Activated CD4-positive, alpha-beta memory T cell treated with anti-CD3 and anti-CD28 coated beads for 36 hours (primary cell): ENCODE measurements at regions of chr15 and their contacts with region 1.

Region 1: GRCh38 chr15:73633111-73633990 is at the start of gene NPTN:
- DNase-seq: peak; percentile 99
- H3K4me3 Mint-ChIP-seq: peak within 1 kb of the TSS; percentile 83
- H3K27ac Mint-ChIP-seq: peak within 1 kb of the TSS; percentile 52
- H3K4me1 Mint-ChIP-seq: peaks cover 47% of the 10 kb centered on the region
- H3K27me3 Mint-ChIP-seq: peaks cover 10% of the 10 kb centered on the region
- total RNA-seq, gene NPTN: 46.7 to 49.8 TPM

Region 2: GRCh38 chr15:72783563-72784237 is 849.7 kb before region 1 on chr15 and contains the start of gene ADPGK:
- CTCF ChIA-PET with region 1: no interaction called
- POLR2A ChIA-PET with region 1: no interaction called
- intact Hi-C with region 1: loop called (anchors 2 kb)
- DNase-seq: peak; percentile 95
- H3K4me3 Mint-ChIP-seq: peak within 1 kb of the TSS; percentile 85
- H3K27ac Mint-ChIP-seq: peak within 1 kb of the TSS; percentile 93
- H3K4me1 Mint-ChIP-seq: peaks cover 65% of the 10 kb centered on the region
- H3K27me3 Mint-ChIP-seq: no peaks in the 10 kb centered on the region
- total RNA-seq, gene ADPGK: 60.9 to 61.5 TPM

Region 3: GRCh38 chr15:73305331-73306211 is 327.8 kb before region 1 on chr15:
- CTCF ChIA-PET with region 1: interaction called, 7 read pairs
- POLR2A ChIA-PET with region 1: no interaction called
- intact Hi-C with region 1: loop called (anchors 5 kb)
- DNase-seq: peak; percentile 37
- H3K4me3 Mint-ChIP-seq: no peak overlapping the region
- H3K27ac Mint-ChIP-seq: no peak overlapping the region
- H3K4me1 Mint-ChIP-seq: peaks cover 4% of the 10 kb centered on the region
- H3K27me3 Mint-ChIP-seq: no peaks in the 10 kb centered on the region

Region 4: DNA sequence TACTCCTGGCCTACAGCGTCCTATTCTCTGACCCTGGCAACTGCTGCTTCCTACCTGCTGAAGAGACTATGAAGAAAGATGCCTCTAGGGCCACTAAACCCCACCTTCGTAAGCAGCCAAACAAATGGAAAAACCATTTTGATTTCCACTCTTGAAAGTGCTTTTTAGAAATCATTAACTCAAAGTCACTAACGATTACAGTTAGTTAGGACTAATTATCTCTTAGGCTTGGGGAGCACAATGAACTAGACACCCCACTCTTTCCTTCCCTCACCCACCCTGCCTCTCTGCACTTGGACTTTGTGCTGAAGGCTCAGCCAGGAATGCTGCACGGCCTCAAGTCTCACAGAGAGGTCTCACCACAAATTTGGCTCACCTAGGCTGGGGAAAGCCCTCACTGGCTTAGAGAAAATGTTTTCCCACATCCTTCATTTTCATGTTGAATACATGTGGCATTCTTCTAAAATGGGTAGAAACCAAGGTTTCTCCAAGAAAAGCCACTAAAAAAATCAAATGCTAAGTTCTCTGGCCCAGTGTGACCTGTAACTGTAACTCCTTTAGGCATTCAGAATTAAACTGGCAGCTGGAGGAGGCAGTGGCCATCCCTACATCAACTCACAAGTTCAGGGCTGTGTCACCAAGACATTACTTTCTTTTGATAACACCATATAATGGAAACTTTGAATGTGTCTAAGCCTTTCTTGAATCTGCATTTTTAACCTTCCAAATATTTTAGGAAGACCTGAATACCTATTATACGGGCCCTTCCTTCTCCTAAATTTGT is 47.3 kb before region 1 on chr15:
- CTCF ChIA-PET with region 1: interaction called, 10 read pairs
- POLR2A ChIA-PET with region 1: no interaction called
- intact Hi-C with region 1: no loop called
- DNase-seq: no peak
- H3K4me3 Mint-ChIP-seq: no peak overlapping the region
- H3K27ac Mint-ChIP-seq: no peak overlapping the region
- H3K4me1 Mint-ChIP-seq: peaks cover 15% of the 10 kb centered on the region
- H3K27me3 Mint-ChIP-seq: no peaks in the 10 kb centered on the region

Region 5: DNA sequence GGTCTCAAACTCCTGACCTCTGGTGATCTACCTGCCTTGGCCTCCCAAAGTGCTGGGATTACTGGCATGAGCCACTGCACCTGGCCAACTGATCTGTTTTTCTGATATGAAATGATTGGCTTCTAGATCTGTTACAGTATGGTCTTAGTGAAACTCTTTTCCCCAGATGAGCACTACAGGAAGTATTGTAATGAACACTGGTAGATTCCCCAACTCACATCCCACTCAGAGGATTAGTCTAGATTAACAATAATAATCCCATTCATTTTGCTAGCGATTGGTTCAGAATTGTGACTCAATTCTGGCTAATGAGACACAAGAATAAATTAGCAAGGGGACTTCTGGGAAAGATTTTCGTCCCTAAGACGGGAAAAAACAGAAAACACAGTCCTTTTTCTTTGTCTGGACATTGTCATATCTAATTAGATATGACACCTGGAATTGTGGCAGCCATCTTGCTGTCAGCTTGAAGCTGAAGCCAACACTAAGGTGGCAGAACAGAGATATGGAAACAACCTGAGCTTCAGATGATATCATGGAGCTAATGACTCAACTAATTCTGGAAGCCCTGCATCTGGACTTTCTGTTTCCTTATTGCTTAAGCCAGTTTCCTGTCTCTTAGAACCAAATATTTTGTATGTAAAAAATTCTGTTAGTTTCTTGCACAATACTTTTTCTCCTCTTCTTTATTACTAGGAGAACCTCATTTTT is 17.2 kb after region 1 on chr15:
- CTCF ChIA-PET with region 1: interaction called, 37 read pairs
- POLR2A ChIA-PET with region 1: no interaction called
- intact Hi-C with region 1: loop called (anchors 2 kb)
- DNase-seq: peak; percentile 37
- H3K4me3 Mint-ChIP-seq: no peak overlapping the region
- H3K27ac Mint-ChIP-seq: peak overlapping the region; percentile 34
- H3K4me1 Mint-ChIP-seq: peaks cover 17% of the 10 kb centered on the region
- H3K27me3 Mint-ChIP-seq: peaks cover 22% of the 10 kb centered on the region

Region 6: GRCh38 chr15:73691396-73691795 is 58.0 kb after region 1 on chr15:
- CTCF ChIA-PET with region 1: interaction called, 437 read pairs
- POLR2A ChIA-PET with region 1: no interaction called
- intact Hi-C with region 1: no loop called
- DNase-seq: peak; percentile 27
- H3K4me3 Mint-ChIP-seq: no peak overlapping the region
- H3K27ac Mint-ChIP-seq: no peak overlapping the region
- H3K4me1 Mint-ChIP-seq: peaks cover 8% of the 10 kb centered on the region
- H3K27me3 Mint-ChIP-seq: peaks cover 40% of the 10 kb centered on the region

Region 7: GRCh38 chr15:73991726-73992593 is 358.6 kb after region 1 on chr15 and contains the start of gene STOML1:
- CTCF ChIA-PET with region 1: no interaction called
- POLR2A ChIA-PET with region 1: no interaction called
- intact Hi-C with region 1: loop called (anchors 10 kb)
- DNase-seq: peak; percentile 97
- H3K4me3 Mint-ChIP-seq: peak within 1 kb of the TSS; percentile 80
- H3K27ac Mint-ChIP-seq: peak within 1 kb of the TSS; percentile 70
- H3K4me1 Mint-ChIP-seq: peaks cover 30% of the 10 kb centered on the region
- H3K27me3 Mint-ChIP-seq: no peaks in the 10 kb centered on the region
- total RNA-seq, gene STOML1: 7.1 to 10.1 TPM